Ovary (tissue), 10 donors: ENCODE measurements at regions of chr18 and their contacts with region 1.

Region 1: GRCh38 chr18:21012308-21012707 is 99.3 kb downstream of the ROCK1 start:
- DNase-seq: no peak
- H3K4me3 ChIP-seq: no peak overlapping the region
- H3K27ac ChIP-seq: no peak overlapping the region
- H3K4me1 ChIP-seq: no peaks in the 10 kb centered on the region
- H3K27me3 ChIP-seq: no peaks in the 10 kb centered on the region
- CTCF ChIP-seq: no peak
- EP300 ChIP-seq: no peak
- POLR2A ChIP-seq: no peak

Region 2: DNA sequence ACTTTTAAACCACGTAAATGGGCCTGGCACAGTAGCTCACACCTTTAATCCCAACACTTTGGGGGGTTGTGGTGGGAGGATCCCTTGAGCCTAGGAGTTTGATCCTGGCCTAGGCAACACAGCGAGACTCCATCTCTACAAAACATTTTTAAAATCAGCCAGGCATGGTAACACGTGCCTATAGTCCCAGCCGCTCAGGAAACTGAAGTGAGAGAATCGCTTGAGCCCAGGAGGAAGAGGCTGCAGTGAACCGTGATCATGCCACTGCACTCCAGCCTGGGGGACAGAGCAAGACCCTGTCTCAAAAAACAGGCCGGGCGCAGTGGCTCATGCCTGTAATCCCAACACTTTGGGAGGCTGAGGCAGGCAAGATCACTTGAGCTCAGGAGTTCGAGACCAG is 87.1 kb after region 1 on chr18:
- intact Hi-C with region 1: loop called in 1 of 4 experiments (anchors 10 kb)
- DNase-seq: no peak
- H3K4me3 ChIP-seq: no peak overlapping the region
- H3K27ac ChIP-seq: no peak overlapping the region
- H3K4me1 ChIP-seq: peaks cover 1% of the 10 kb centered on the region
- H3K27me3 ChIP-seq: no peaks in the 10 kb centered on the region
- CTCF ChIP-seq: no peak
- EP300 ChIP-seq: no peak
- POLR2A ChIP-seq: no peak

Region 3: DNA sequence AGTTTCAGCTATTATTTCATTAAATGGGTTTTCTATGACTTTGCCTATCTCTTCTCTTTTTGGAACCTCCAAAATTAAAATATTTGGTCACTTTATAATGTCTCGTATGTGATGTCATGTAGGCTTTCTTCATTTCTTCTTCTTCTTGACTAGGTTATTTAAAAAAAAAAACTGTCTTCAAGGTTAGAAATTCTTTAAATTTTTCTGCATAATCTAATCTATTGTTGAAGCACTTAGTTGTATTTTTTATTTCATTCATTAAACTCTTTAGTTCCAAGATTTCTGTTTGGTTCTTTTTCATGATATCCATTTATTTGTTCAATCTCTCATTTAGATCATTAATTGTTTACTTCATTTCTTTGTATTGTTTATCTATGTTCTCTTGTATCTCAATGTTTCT is 143.1 kb after region 1 on chr18:
- intact Hi-C with region 1: no loop called
- DNase-seq: no peak
- H3K4me3 ChIP-seq: no peak overlapping the region
- H3K27ac ChIP-seq: no peak overlapping the region
- H3K4me1 ChIP-seq: no peaks in the 10 kb centered on the region
- H3K27me3 ChIP-seq: no peaks in the 10 kb centered on the region
- CTCF ChIP-seq: no peak
- EP300 ChIP-seq: no peak
- POLR2A ChIP-seq: no peak